ENCODE measurements at regions of chr4 and their contacts with region 1.

Region 1: GRCh38 chr4:101347557-101348366 is 436 bp upstream of the PPP3CA start:
- DNase-seq: peak; percentile 95 to 99 (median 98)
- ATAC-seq: peak; percentile 92
- H3K4me3 ChIP-seq: peak overlapping the region; percentile 99
- H3K4me3 Mint-ChIP-seq: peak overlapping the region; percentile 93 to 99 (median 98)
- H3K27ac ChIP-seq: peak overlapping the region; percentile 78
- H3K27ac Mint-ChIP-seq: peak overlapping the region; percentile 86 to 96 (median 93)
- H3K4me1 ChIP-seq: peaks cover 7 to 15% of the 10 kb centered on the region in 2 donors
- H3K4me1 Mint-ChIP-seq: peaks cover 23 to 40% (median 35%) of the 10 kb centered on the region in 7 donors
- H3K27me3 ChIP-seq: no peaks in the 10 kb centered on the region
- H3K27me3 Mint-ChIP-seq: peaks cover 5 to 63% (median 17%) of the 10 kb centered on the region in 5 donors

Region 2: GRCh38 chr4:99949034-99949998 is 1398.4 kb before region 1 on chr4:
- CTCF ChIA-PET with region 1: no interaction called
- POLR2A ChIA-PET with region 1: interaction called, 4 read pairs
- intact Hi-C with region 1: loop called (anchors 1 to 2 kb)
- DNase-seq: peak; percentile 63 to 90 (median 86)
- ATAC-seq: peak; percentile 49
- H3K4me3 ChIP-seq: peak overlapping the region; percentile 93
- H3K4me3 Mint-ChIP-seq: no peak overlapping the region
- H3K27ac ChIP-seq: peak overlapping the region; percentile 91
- H3K27ac Mint-ChIP-seq: no peak overlapping the region
- H3K4me1 ChIP-seq: peaks cover 34 to 37% of the 10 kb centered on the region in 2 donors
- H3K4me1 Mint-ChIP-seq: peaks cover 18 to 40% (median 31%) of the 10 kb centered on the region in 7 donors
- H3K27me3 ChIP-seq: no peaks in the 10 kb centered on the region
- H3K27me3 Mint-ChIP-seq: no peaks in the 10 kb centered on the region

Region 3: GRCh38 chr4:101169044-101170014 is 178.4 kb before region 1 on chr4:
- CTCF ChIA-PET with region 1: no interaction called
- POLR2A ChIA-PET with region 1: no interaction called
- intact Hi-C with region 1: loop called (anchors 1 to 2 kb)
- DNase-seq: peak; percentile 9 to 64 (median 54)
- ATAC-seq: peak; percentile 96
- H3K4me3 ChIP-seq: no peak overlapping the region
- H3K4me3 Mint-ChIP-seq: no peak overlapping the region
- H3K27ac ChIP-seq: no peak overlapping the region
- H3K27ac Mint-ChIP-seq: no peak overlapping the region
- H3K4me1 ChIP-seq: no peaks in the 10 kb centered on the region
- H3K4me1 Mint-ChIP-seq: peaks cover 0 to 6% (median 3%) of the 10 kb centered on the region in 7 donors
- H3K27me3 ChIP-seq: no peaks in the 10 kb centered on the region
- H3K27me3 Mint-ChIP-seq: no peaks in the 10 kb centered on the region

Region 4: GRCh38 chr4:101328063-101328602 is 19.6 kb before region 1 on chr4:
- CTCF ChIA-PET with region 1: interaction called, 4 read pairs
- POLR2A ChIA-PET with region 1: interaction called, 12 read pairs
- intact Hi-C with region 1: loop called (anchors 1 kb)
- DNase-seq: peak in 7 of 9 donors; percentile 47 to 78 (median 66)
- ATAC-seq: peak; percentile 93
- H3K4me3 ChIP-seq: peak overlapping the region; percentile 31
- H3K4me3 Mint-ChIP-seq: peak overlapping the region; percentile 68 to 86 (median 82)
- H3K27ac ChIP-seq: no peak overlapping the region
- H3K27ac Mint-ChIP-seq: peak overlapping the region; percentile 1 to 92 (median 83)
- H3K4me1 ChIP-seq: peaks cover 18 to 49% of the 10 kb centered on the region in 2 donors
- H3K4me1 Mint-ChIP-seq: peaks cover 31 to 66% (median 55%) of the 10 kb centered on the region in 7 donors
- H3K27me3 ChIP-seq: no peaks in the 10 kb centered on the region
- H3K27me3 Mint-ChIP-seq: peaks cover 0 to 50% (median 4%) of the 10 kb centered on the region in 5 donors

Region 5: GRCh38 chr4:102430461-102430910 is 1082.7 kb after region 1 on chr4:
- CTCF ChIA-PET with region 1: no interaction called
- POLR2A ChIA-PET with region 1: no interaction called
- intact Hi-C with region 1: loop called (anchors 2 to 10 kb)
- DNase-seq: no peak
- ATAC-seq: no peak
- H3K4me3 ChIP-seq: peak overlapping the region; percentile 72
- H3K4me3 Mint-ChIP-seq: peak overlapping the region; percentile 75 to 92 (median 88)
- H3K27ac ChIP-seq: peak overlapping the region; percentile 67
- H3K27ac Mint-ChIP-seq: peak overlapping the region in 8 of 9 donors; percentile 26 to 92 (median 80)
- H3K4me1 ChIP-seq: no peaks in the 10 kb centered on the region
- H3K4me1 Mint-ChIP-seq: peaks cover 0 to 19% (median 5%) of the 10 kb centered on the region in 7 donors
- H3K27me3 ChIP-seq: no peaks in the 10 kb centered on the region
- H3K27me3 Mint-ChIP-seq: peaks cover 0 to 16% (median 0%) of the 10 kb centered on the region in 5 donors

Region 6: GRCh38 chr4:102868781-102869568 is 1521.2 kb after region 1 on chr4 and contains the start of gene CISD2:
- CTCF ChIA-PET with region 1: no interaction called
- POLR2A ChIA-PET with region 1: interaction called, 3 read pairs
- intact Hi-C with region 1: loop called (anchors 2 kb)
- DNase-seq: peak; percentile 87 to 95 (median 92)
- ATAC-seq: peak; percentile 90
- H3K4me3 ChIP-seq: peak within 1 kb of the TSS; percentile 95
- H3K4me3 Mint-ChIP-seq: peak within 1 kb of the TSS; percentile 88 to 100 (median 96)
- H3K27ac ChIP-seq: peak within 1 kb of the TSS; percentile 99
- H3K27ac Mint-ChIP-seq: peak within 1 kb of the TSS; percentile 98 to 100 (median 99)
- H3K4me1 ChIP-seq: peaks cover 16 to 28% of the 10 kb centered on the region in 2 donors
- H3K4me1 Mint-ChIP-seq: peaks cover 32 to 80% (median 71%) of the 10 kb centered on the region in 7 donors
- H3K27me3 ChIP-seq: no peaks in the 10 kb centered on the region
- H3K27me3 Mint-ChIP-seq: no peaks in the 10 kb centered on the region
- total RNA-seq, gene CISD2: 11.4 to 50.3 (median 13.4) TPM